CD14-positive monocyte (primary cell): ENCODE measurements at regions of chr9 and their contacts with region 1.

Region 1: DNA sequence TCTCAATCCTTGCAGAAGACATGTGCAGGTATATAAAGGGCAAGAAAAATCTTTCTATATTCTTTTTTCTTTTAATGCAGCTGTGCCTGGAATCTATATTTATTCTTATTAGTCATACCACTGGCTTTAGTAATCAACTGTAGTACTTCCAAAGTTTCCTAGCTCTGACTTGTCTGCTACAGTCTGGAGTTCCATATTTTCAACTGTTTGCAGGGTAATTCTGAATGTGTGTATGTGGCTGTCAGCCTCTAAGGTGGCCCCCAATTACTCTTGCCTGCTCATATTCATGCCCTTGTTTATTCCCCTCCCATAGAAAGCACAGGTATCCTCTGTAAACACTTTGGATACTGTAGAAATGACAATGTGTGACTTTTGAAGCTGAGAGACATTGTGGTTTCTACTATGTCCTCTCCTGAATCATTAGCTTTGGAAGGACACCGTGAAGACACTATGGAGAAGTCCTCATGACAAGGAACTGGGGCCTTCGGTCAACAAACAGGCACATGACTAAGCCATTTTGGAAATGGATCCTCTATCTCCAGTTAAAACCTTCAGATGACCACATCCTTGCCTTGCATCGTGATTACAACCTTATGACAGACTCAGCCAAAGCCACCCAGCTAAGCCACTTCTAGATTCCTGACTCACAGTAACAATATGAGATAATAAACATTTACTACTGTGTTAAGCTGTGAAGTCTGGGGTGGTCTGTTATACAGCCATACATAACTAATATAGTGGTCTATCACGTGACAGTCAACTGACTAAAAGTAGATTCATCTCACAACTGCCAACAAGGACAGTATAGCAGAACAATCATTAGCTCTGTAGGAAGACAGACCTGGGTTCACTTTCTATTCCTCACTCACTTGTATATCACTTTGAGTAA is 49.5 kb upstream of the SUSD1 start:
- DNase-seq: no peak
- H3K4me3 ChIP-seq: no peak overlapping the region
- H3K4me3 Mint-ChIP-seq: no peak overlapping the region
- H3K27ac ChIP-seq: peak overlapping the region in 1 of 2 donors; percentile 55
- H3K27ac Mint-ChIP-seq: peak overlapping the region in 5 of 7 donors; percentile 36 to 73 (median 51)
- H3K4me1 ChIP-seq: no peaks in the 10 kb centered on the region
- H3K4me1 Mint-ChIP-seq: no peaks in the 10 kb centered on the region
- H3K27me3 ChIP-seq: no peaks in the 10 kb centered on the region
- H3K27me3 Mint-ChIP-seq: peaks cover 0 to 2% (median 0%) of the 10 kb centered on the region in 3 donors
- CTCF ChIP-seq: no peak

Region 2: DNA sequence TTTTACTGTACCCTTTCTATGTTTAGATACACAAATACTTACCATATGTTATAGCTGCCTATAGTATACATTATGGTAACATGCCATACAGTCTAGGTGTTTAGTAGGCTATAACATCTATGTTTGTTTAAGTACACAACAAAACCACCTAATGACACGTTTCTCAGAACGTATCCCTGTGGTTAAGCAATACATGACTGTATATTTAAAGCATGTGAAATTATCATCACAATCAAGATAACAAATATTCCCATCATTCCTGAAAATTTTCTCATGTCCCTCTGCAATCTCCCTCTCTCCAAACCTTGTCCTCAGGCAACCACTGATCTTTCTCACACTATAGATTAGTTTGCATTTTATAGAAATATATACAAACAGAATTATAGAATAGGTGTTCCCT is 16.9 kb after region 1 on chr9:
- intact Hi-C with region 1: no loop called
- DNase-seq: no peak
- H3K4me3 ChIP-seq: no peak overlapping the region
- H3K4me3 Mint-ChIP-seq: no peak overlapping the region
- H3K27ac ChIP-seq: no peak overlapping the region
- H3K27ac Mint-ChIP-seq: no peak overlapping the region
- H3K4me1 ChIP-seq: no peaks in the 10 kb centered on the region
- H3K4me1 Mint-ChIP-seq: no peaks in the 10 kb centered on the region
- H3K27me3 ChIP-seq: no peaks in the 10 kb centered on the region
- H3K27me3 Mint-ChIP-seq: no peaks in the 10 kb centered on the region
- CTCF ChIP-seq: no peak

Region 3: DNA sequence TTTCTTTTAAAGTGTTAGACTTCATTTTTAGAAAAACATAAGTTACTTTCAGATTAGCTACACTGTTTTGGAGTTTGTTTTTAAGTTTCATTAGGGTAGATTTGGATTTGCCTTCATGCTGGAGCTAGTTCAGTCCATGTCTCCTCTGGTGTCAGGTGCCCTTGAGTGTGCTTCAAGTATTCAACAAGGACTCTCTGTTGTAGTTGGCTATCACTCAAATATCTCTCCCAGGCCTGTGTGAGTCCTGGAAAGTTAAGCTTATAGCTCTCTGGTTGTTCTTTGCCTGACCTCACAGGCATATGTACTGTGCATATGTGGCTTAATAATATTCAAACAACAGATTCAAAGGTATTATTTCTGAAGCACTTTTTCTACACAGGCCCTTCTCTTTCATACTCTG is 63.4 kb after region 1 on chr9:
- intact Hi-C with region 1: loop called in 1 of 2 experiments (anchors 10 kb)
- DNase-seq: no peak
- H3K4me3 ChIP-seq: no peak overlapping the region
- H3K4me3 Mint-ChIP-seq: no peak overlapping the region
- H3K27ac ChIP-seq: no peak overlapping the region
- H3K27ac Mint-ChIP-seq: peak overlapping the region in 3 of 7 donors; percentile 3 to 46 (median 44)
- H3K4me1 ChIP-seq: no peaks in the 10 kb centered on the region
- H3K4me1 Mint-ChIP-seq: peaks cover 5% of the 10 kb centered on the region
- H3K27me3 ChIP-seq: no peaks in the 10 kb centered on the region
- H3K27me3 Mint-ChIP-seq: no peaks in the 10 kb centered on the region
- CTCF ChIP-seq: no peak

Region 4: GRCh38 chr9:112338561-112338960 is 113.9 kb after region 1 on chr9:
- intact Hi-C with region 1: no loop called
- DNase-seq: no peak
- H3K4me3 ChIP-seq: no peak overlapping the region
- H3K4me3 Mint-ChIP-seq: no peak overlapping the region
- H3K27ac ChIP-seq: no peak overlapping the region
- H3K27ac Mint-ChIP-seq: no peak overlapping the region
- H3K4me1 ChIP-seq: peaks cover 4 to 13% of the 10 kb centered on the region in 2 donors
- H3K4me1 Mint-ChIP-seq: peaks cover 6% of the 10 kb centered on the region
- H3K27me3 ChIP-seq: no peaks in the 10 kb centered on the region
- H3K27me3 Mint-ChIP-seq: peaks cover 1 to 5% (median 1%) of the 10 kb centered on the region in 3 donors
- CTCF ChIP-seq: no peak

Region 5: GRCh38 chr9:112355427-112355897 is 130.8 kb after region 1 on chr9:
- intact Hi-C with region 1: no loop called
- DNase-seq: no peak
- H3K4me3 ChIP-seq: no peak overlapping the region
- H3K4me3 Mint-ChIP-seq: no peak overlapping the region
- H3K27ac ChIP-seq: no peak overlapping the region
- H3K27ac Mint-ChIP-seq: no peak overlapping the region
- H3K4me1 ChIP-seq: peaks cover 0 to 4% of the 10 kb centered on the region in 2 donors
- H3K4me1 Mint-ChIP-seq: peaks cover 12% of the 10 kb centered on the region
- H3K27me3 ChIP-seq: no peaks in the 10 kb centered on the region
- H3K27me3 Mint-ChIP-seq: peaks cover 0 to 8% (median 0%) of the 10 kb centered on the region in 3 donors
- CTCF ChIP-seq: no peak

Region 6: GRCh38 chr9:112421771-112422222 is 197.2 kb after region 1 on chr9:
- intact Hi-C with region 1: no loop called
- DNase-seq: no peak
- H3K4me3 ChIP-seq: no peak overlapping the region
- H3K4me3 Mint-ChIP-seq: no peak overlapping the region
- H3K27ac ChIP-seq: no peak overlapping the region
- H3K27ac Mint-ChIP-seq: peak overlapping the region in 2 of 7 donors; percentile 36 to 53
- H3K4me1 ChIP-seq: no peaks in the 10 kb centered on the region
- H3K4me1 Mint-ChIP-seq: no peaks in the 10 kb centered on the region
- H3K27me3 ChIP-seq: no peaks in the 10 kb centered on the region
- H3K27me3 Mint-ChIP-seq: no peaks in the 10 kb centered on the region
- CTCF ChIP-seq: no peak